Prostate gland (tissue), 2 donors: ENCODE measurements at regions of chr6 and their contacts with region 1.

Region 1: GRCh38 chr6:159693128-159693893 is at the start of gene SOD2:
- DNase-seq: peak; percentile 76
- H3K4me3 ChIP-seq: peak within 1 kb of the TSS; percentile 77 to 83
- H3K27ac ChIP-seq: peak within 1 kb of the TSS; percentile 96
- H3K4me1 ChIP-seq: peaks cover 14% of the 10 kb centered on the region
- H3K27me3 ChIP-seq: no peaks in the 10 kb centered on the region
- CTCF ChIP-seq: no peak
- POLR2A ChIP-seq: peak; percentile 90
- total RNA-seq, gene SOD2: 196 to 285 TPM

Region 2: GRCh38 chr6:157974341-157974894 is 1718.9 kb before region 1 on chr6:
- intact Hi-C with region 1: no loop called
- DNase-seq: no peak
- H3K4me3 ChIP-seq: no peak overlapping the region
- H3K27ac ChIP-seq: no peak overlapping the region
- H3K4me1 ChIP-seq: no peaks in the 10 kb centered on the region
- H3K27me3 ChIP-seq: no peaks in the 10 kb centered on the region
- CTCF ChIP-seq: no peak
- POLR2A ChIP-seq: no peak

Region 3: GRCh38 chr6:159513074-159513720 is 180.1 kb before region 1 on chr6:
- intact Hi-C with region 1: no loop called
- DNase-seq: no peak
- H3K4me3 ChIP-seq: no peak overlapping the region
- H3K27ac ChIP-seq: no peak overlapping the region
- H3K4me1 ChIP-seq: no peaks in the 10 kb centered on the region
- H3K27me3 ChIP-seq: no peaks in the 10 kb centered on the region
- CTCF ChIP-seq: no peak
- POLR2A ChIP-seq: no peak

Region 4: DNA sequence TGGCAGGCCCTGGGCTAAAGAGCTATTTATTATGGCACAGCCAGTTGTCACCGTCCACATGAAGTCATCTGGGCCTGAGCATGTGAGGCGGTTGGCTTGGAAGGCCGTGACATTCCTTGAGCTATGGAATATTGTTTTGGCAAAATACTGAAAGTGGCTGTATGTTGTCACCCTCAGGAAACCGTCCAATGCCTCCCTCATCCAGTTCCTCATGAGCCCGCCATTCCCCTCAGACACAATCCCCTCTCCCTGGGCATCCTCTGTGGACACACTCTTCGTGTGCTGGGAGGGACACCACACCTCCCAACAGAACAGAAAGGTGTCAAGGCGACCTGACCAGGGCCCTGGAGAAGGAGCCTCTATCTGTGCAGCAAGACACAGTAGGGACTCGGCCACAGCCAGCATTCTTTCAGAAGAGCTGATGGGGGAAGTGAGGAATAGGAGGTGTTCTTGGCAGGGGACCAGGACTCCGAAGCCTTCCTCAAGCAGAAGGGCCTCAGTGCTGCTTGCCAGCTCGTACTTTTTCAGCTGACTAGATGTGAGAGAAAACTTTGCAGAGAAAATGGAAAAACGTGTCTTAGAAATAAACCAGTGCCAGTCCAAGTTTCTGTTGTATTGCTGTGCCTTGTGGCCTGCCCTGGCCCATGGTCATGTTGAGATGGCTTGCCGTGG is 120.7 kb before region 1 on chr6:
- intact Hi-C with region 1: no loop called
- DNase-seq: no peak
- H3K4me3 ChIP-seq: no peak overlapping the region
- H3K27ac ChIP-seq: no peak overlapping the region
- H3K4me1 ChIP-seq: no peaks in the 10 kb centered on the region
- H3K27me3 ChIP-seq: no peaks in the 10 kb centered on the region
- CTCF ChIP-seq: no peak
- POLR2A ChIP-seq: no peak

Region 5: DNA sequence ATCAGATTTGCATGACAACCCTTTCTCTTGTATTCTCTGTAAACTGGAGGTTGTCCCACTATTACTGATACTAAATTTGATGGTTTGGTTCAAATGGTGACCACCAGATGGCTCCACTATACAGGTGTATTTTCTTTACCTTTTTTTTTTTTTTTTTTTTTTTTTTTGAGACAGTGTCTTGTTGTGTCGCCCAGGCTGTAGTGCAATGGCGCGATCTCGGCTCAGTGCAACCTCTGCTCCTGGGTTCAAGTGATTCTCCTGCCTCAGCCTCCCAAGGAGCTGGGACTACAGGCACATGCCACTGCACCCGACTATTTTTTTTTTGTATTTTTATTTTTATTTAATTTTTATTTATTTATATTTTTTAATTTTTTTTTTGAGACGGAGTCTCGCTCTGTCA is 27.4 kb after region 1 on chr6:
- intact Hi-C with region 1: no loop called
- DNase-seq: peak; percentile 49
- H3K4me3 ChIP-seq: no peak overlapping the region
- H3K27ac ChIP-seq: no peak overlapping the region
- H3K4me1 ChIP-seq: peaks cover 8% of the 10 kb centered on the region
- H3K27me3 ChIP-seq: no peaks in the 10 kb centered on the region
- CTCF ChIP-seq: peak in 3 of 4 experiments; percentile 33 to 64 (median 44)
- POLR2A ChIP-seq: no peak

Region 6: GRCh38 chr6:159761873-159762680 is 68.8 kb after region 1 on chr6 and contains the start of gene ACAT2:
- intact Hi-C with region 1: loop called (anchors 2 kb)
- DNase-seq: peak; percentile 97
- H3K4me3 ChIP-seq: peak within 1 kb of the TSS; percentile 66 to 88
- H3K27ac ChIP-seq: peak within 1 kb of the TSS; percentile 98 to 99
- H3K4me1 ChIP-seq: no peaks in the 10 kb centered on the region
- H3K27me3 ChIP-seq: no peaks in the 10 kb centered on the region
- CTCF ChIP-seq: peak in 2 of 4 experiments; percentile 29 to 35
- POLR2A ChIP-seq: peak; percentile 73
- total RNA-seq, gene ACAT2: 10.2 to 22.6 TPM